CD4-positive, alpha-beta T cell (primary cell): ENCODE measurements at regions of chr1 and their contacts with region 1.

Region 1: GRCh38 chr1:58783993-58784757 is at the start of gene JUN:
- DNase-seq: peak; percentile 97 to 100 (median 98)
- ATAC-seq: peak; percentile 73
- H3K4me3 ChIP-seq: peak within 1 kb of the TSS; percentile 70
- H3K4me3 Mint-ChIP-seq: peak within 1 kb of the TSS; percentile 95
- H3K27ac ChIP-seq: peak within 1 kb of the TSS; percentile 99
- H3K27ac Mint-ChIP-seq: peak within 1 kb of the TSS; percentile 94
- H3K4me1 ChIP-seq: peaks cover 33% of the 10 kb centered on the region
- H3K4me1 Mint-ChIP-seq: peaks cover 38% of the 10 kb centered on the region
- H3K27me3 ChIP-seq: no peaks in the 10 kb centered on the region
- H3K27me3 Mint-ChIP-seq: peaks cover 11% of the 10 kb centered on the region
- CTCF ChIP-seq: no peak
- total RNA-seq, gene JUN: 585 to 588 TPM

Region 2: DNA sequence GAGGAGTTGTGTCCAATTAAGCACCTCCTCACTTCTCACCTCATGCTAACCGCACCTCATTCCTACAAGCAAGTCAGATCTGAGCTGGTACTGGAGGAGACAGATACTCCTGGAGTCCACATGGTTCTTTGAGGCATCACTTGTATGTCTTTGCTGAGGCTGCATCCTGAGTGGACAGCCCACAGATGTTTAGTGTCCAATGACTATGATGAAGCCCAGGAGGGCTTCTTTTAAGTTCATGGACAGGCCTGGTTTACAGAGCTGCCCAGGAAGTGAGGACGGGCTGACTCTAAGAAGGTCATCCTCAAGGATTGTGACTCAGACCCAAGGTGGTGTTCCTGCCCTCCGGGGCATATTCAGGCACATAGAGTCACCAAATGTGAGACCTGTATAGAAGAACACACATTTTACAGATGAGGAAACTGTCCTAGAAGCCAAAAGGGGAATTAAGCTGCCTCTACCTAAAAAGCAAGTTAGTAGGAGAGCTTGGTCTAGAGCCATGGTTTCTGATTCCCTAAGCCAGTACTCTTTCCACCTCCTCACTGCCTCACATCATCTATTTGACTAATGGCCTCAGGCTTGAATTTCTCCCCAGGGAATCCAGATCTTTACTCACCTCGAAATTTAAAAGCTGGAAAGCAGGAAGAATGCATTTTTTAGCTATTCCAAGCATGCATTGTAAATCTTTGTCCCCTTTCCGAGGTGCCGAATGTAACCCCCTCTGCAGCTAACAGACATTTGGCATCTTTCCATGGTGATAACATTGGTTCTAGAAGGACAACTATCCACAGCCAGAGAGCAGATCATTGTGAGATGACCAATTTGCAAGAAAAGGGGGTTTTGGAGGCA is 465.8 kb before region 1 on chr1:
- CTCF ChIA-PET with region 1: no interaction called
- POLR2A ChIA-PET with region 1: no interaction called
- intact Hi-C with region 1: no loop called
- DNase-seq: no peak
- ATAC-seq: no peak
- H3K4me3 ChIP-seq: no peak overlapping the region
- H3K4me3 Mint-ChIP-seq: no peak overlapping the region
- H3K27ac ChIP-seq: no peak overlapping the region
- H3K27ac Mint-ChIP-seq: no peak overlapping the region
- H3K4me1 ChIP-seq: no peaks in the 10 kb centered on the region
- H3K4me1 Mint-ChIP-seq: no peaks in the 10 kb centered on the region
- H3K27me3 ChIP-seq: no peaks in the 10 kb centered on the region
- H3K27me3 Mint-ChIP-seq: no peaks in the 10 kb centered on the region
- CTCF ChIP-seq: no peak

Region 3: GRCh38 chr1:58628987-58629598 is 155.1 kb before region 1 on chr1:
- CTCF ChIA-PET with region 1: no interaction called
- POLR2A ChIA-PET with region 1: no interaction called
- intact Hi-C with region 1: no loop called
- DNase-seq: no peak
- ATAC-seq: no peak
- H3K4me3 ChIP-seq: no peak overlapping the region
- H3K4me3 Mint-ChIP-seq: no peak overlapping the region
- H3K27ac ChIP-seq: no peak overlapping the region
- H3K27ac Mint-ChIP-seq: no peak overlapping the region
- H3K4me1 ChIP-seq: no peaks in the 10 kb centered on the region
- H3K4me1 Mint-ChIP-seq: no peaks in the 10 kb centered on the region
- H3K27me3 ChIP-seq: no peaks in the 10 kb centered on the region
- H3K27me3 Mint-ChIP-seq: no peaks in the 10 kb centered on the region
- CTCF ChIP-seq: no peak

Region 4: DNA sequence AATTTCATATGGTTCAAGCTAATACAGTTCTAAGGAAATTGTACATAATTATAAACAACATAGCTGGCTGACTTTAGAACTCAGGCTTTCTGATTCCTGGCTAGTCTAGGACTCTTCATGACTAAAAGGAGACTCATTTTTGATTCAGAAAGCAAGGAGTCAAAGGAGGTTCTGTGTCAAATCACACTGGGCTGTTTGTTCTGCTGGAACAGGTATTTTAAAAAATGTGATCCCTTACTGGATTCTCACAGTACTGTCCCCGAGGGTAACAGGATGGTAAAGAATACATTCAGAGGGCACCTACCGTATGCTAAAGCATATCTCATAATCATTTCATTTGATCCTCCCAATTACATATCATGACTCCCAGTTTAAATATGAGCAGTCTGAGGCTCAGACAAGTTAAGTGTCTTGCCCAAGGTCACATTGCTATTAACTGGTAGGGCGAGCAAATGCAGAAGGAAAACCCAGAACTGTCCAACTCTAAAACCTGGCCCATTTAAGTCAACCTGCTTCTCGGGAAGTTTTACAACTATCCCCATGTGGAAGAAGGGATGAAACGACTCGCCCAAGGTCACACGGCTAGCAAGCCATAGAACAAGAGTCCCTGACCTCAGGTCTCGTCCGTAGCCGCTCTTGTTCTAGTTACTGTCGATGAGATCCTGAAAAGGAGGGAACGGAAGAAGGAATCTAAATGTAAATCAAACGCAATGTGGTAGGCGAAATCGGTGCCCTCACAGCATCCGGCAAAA is 85.0 kb before region 1 on chr1:
- CTCF ChIA-PET with region 1: no interaction called
- POLR2A ChIA-PET with region 1: interaction called, 24 read pairs
- intact Hi-C with region 1: no loop called
- DNase-seq: no peak
- ATAC-seq: no peak
- H3K4me3 ChIP-seq: peak overlapping the region; percentile 89
- H3K4me3 Mint-ChIP-seq: peak overlapping the region; percentile 98
- H3K27ac ChIP-seq: peak overlapping the region; percentile 66 to 82
- H3K27ac Mint-ChIP-seq: peak overlapping the region; percentile 97
- H3K4me1 ChIP-seq: peaks cover 21% of the 10 kb centered on the region
- H3K4me1 Mint-ChIP-seq: peaks cover 4% of the 10 kb centered on the region
- H3K27me3 ChIP-seq: no peaks in the 10 kb centered on the region
- H3K27me3 Mint-ChIP-seq: no peaks in the 10 kb centered on the region
- CTCF ChIP-seq: no peak

Region 5: DNA sequence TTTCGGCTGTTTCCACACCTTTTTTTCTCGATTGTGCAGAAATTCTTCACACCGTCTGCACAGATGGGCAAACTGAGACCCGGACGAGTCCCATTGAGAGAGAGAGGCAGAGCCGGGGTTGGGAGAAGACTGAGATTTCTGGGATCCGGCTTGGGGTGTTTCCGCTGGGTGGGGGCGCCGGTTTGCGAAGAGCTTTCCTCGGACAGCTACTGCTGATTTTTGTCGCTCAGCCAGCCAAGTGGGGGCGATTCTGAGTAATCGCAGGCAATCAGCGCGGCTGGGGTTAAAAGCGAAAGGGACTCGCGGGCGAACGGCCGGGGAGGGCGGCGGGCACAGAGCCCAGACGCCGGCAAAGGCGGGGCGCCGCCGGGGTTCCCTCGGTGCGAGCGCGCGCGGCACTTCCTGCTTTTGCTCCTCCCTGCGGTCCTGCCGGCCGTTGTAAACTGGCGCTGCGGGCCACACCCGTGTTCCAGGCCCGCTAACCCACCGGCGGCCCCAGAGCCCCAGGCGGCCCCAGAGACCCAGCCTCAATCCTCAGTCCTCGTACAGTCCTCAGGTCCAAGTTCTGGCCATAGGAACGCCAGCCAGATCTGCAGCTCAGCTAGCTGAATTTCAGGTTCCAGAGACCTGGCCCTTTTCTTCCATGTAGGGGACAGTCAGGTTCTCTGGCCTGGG is 32.0 kb after region 1 on chr1:
- CTCF ChIA-PET with region 1: interaction called, 4 read pairs
- POLR2A ChIA-PET with region 1: interaction called, 41 read pairs
- intact Hi-C with region 1: loop called (anchors 1 to 2 kb)
- DNase-seq: peak; percentile 69 to 91 (median 82)
- ATAC-seq: peak; percentile 69
- H3K4me3 ChIP-seq: peak overlapping the region; percentile 82
- H3K4me3 Mint-ChIP-seq: peak overlapping the region; percentile 90
- H3K27ac ChIP-seq: peak overlapping the region; percentile 61 to 71
- H3K27ac Mint-ChIP-seq: peak overlapping the region; percentile 79
- H3K4me1 ChIP-seq: peaks cover 47% of the 10 kb centered on the region
- H3K4me1 Mint-ChIP-seq: peaks cover 51% of the 10 kb centered on the region
- H3K27me3 ChIP-seq: no peaks in the 10 kb centered on the region
- H3K27me3 Mint-ChIP-seq: no peaks in the 10 kb centered on the region
- CTCF ChIP-seq: no peak

Region 6: GRCh38 chr1:58941471-58942289 is 157.5 kb after region 1 on chr1:
- CTCF ChIA-PET with region 1: interaction called, 3 read pairs
- POLR2A ChIA-PET with region 1: interaction called, 53 read pairs
- intact Hi-C with region 1: loop called in 1 of 2 experiments (anchors 1 kb)
- DNase-seq: peak in 9 of 14 experiments; percentile 10 to 86 (median 33)
- ATAC-seq: peak; percentile 84
- H3K4me3 ChIP-seq: peak overlapping the region; percentile 31
- H3K4me3 Mint-ChIP-seq: peak overlapping the region; percentile 57
- H3K27ac ChIP-seq: peak overlapping the region in 1 of 2 donors; percentile 3
- H3K27ac Mint-ChIP-seq: peak overlapping the region; percentile 60
- H3K4me1 ChIP-seq: peaks cover 55% of the 10 kb centered on the region
- H3K4me1 Mint-ChIP-seq: peaks cover 77% of the 10 kb centered on the region
- H3K27me3 ChIP-seq: no peaks in the 10 kb centered on the region
- H3K27me3 Mint-ChIP-seq: no peaks in the 10 kb centered on the region
- CTCF ChIP-seq: no peak

Region 7: GRCh38 chr1:59071289-59071688 is 287.1 kb after region 1 on chr1:
- CTCF ChIA-PET with region 1: no interaction called
- POLR2A ChIA-PET with region 1: interaction called, 8 read pairs
- intact Hi-C with region 1: loop called (anchors 5 kb)
- DNase-seq: peak in 6 of 14 experiments; percentile 15 to 44 (median 24)
- ATAC-seq: peak; percentile 56
- H3K4me3 ChIP-seq: no peak overlapping the region
- H3K4me3 Mint-ChIP-seq: peak overlapping the region; percentile 56
- H3K27ac ChIP-seq: no peak overlapping the region
- H3K27ac Mint-ChIP-seq: peak overlapping the region; percentile 40
- H3K4me1 ChIP-seq: peaks cover 22% of the 10 kb centered on the region
- H3K4me1 Mint-ChIP-seq: peaks cover 25% of the 10 kb centered on the region
- H3K27me3 ChIP-seq: no peaks in the 10 kb centered on the region
- H3K27me3 Mint-ChIP-seq: no peaks in the 10 kb centered on the region
- CTCF ChIP-seq: no peak

Region 8: GRCh38 chr1:59699227-59699847 is 915.2 kb after region 1 on chr1:
- CTCF ChIA-PET with region 1: no interaction called
- POLR2A ChIA-PET with region 1: interaction called, 33 read pairs
- intact Hi-C with region 1: loop called in 1 of 2 experiments (anchors 2 kb)
- DNase-seq: peak in 6 of 14 experiments; percentile 7 to 74 (median 46)
- ATAC-seq: peak; percentile 63
- H3K4me3 ChIP-seq: no peak overlapping the region
- H3K4me3 Mint-ChIP-seq: no peak overlapping the region
- H3K27ac ChIP-seq: no peak overlapping the region
- H3K27ac Mint-ChIP-seq: no peak overlapping the region
- H3K4me1 ChIP-seq: peaks cover 12% of the 10 kb centered on the region
- H3K4me1 Mint-ChIP-seq: peaks cover 13% of the 10 kb centered on the region
- H3K27me3 ChIP-seq: no peaks in the 10 kb centered on the region
- H3K27me3 Mint-ChIP-seq: no peaks in the 10 kb centered on the region
- CTCF ChIP-seq: peak; percentile 98